CD8-positive, alpha-beta T cell (primary cell): ENCODE measurements at regions of chr13 and their contacts with region 1.

Region 1: GRCh38 chr13:95181586-95181985 is 119.7 kb downstream of the ABCC4 start:
- DNase-seq: no peak
- ATAC-seq: no peak
- H3K4me3 ChIP-seq: no peak overlapping the region
- H3K4me3 Mint-ChIP-seq: no peak overlapping the region
- H3K27ac ChIP-seq: no peak overlapping the region
- H3K27ac Mint-ChIP-seq: no peak overlapping the region
- H3K4me1 ChIP-seq: peaks cover 49% of the 10 kb centered on the region
- H3K4me1 Mint-ChIP-seq: peaks cover 82% of the 10 kb centered on the region
- H3K27me3 ChIP-seq: no peaks in the 10 kb centered on the region
- H3K27me3 Mint-ChIP-seq: no peaks in the 10 kb centered on the region
- CTCF ChIP-seq: no peak

Region 2: DNA sequence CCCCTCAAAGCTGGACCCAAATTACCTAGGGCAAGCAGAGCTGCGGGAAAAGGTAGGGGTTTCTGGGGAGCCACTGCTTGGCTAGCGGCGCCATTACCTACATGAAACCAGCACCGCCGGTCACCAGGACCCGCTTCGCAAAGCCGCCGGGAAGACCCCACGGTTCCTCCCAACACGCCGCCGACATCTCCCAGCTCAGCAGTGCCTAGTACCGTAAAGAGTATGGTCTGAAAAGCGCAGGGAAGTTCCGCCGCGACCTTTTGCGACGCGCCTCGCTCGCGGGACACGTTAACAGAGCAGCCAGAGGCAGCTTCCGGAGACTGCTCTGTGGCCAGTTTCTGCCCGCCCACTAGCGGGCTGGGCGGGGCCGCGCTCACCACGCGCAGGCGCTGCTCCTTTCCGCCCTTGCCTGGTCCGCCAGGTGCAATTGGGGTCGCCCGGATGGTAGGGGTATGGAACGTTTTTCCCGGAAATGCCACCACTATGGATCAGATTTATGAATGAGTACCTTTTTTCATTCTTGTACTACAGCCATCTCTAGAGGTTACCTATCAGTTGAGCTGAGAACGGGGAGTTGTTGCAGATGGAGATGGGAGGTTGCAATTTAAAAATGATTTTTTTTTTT is 585.5 kb before region 1 on chr13 and contains the start of gene TGDS:
- CTCF ChIA-PET with region 1: no interaction called
- POLR2A ChIA-PET with region 1: no interaction called
- intact Hi-C with region 1: loop called (anchors 5 to 10 kb)
- DNase-seq: peak; percentile 74 to 96 (median 87)
- ATAC-seq: peak; percentile 97
- H3K4me3 ChIP-seq: peak within 1 kb of the TSS; percentile 94 to 97
- H3K4me3 Mint-ChIP-seq: peak within 1 kb of the TSS; percentile 88
- H3K27ac ChIP-seq: peak within 1 kb of the TSS; percentile 77 to 83
- H3K27ac Mint-ChIP-seq: peak within 1 kb of the TSS; percentile 94
- H3K4me1 ChIP-seq: peaks cover 24% of the 10 kb centered on the region
- H3K4me1 Mint-ChIP-seq: peaks cover 42% of the 10 kb centered on the region
- H3K27me3 ChIP-seq: no peaks in the 10 kb centered on the region
- H3K27me3 Mint-ChIP-seq: no peaks in the 10 kb centered on the region
- CTCF ChIP-seq: no peak
- total RNA-seq, gene TGDS: 4.5 to 4.6 TPM

Region 3: DNA sequence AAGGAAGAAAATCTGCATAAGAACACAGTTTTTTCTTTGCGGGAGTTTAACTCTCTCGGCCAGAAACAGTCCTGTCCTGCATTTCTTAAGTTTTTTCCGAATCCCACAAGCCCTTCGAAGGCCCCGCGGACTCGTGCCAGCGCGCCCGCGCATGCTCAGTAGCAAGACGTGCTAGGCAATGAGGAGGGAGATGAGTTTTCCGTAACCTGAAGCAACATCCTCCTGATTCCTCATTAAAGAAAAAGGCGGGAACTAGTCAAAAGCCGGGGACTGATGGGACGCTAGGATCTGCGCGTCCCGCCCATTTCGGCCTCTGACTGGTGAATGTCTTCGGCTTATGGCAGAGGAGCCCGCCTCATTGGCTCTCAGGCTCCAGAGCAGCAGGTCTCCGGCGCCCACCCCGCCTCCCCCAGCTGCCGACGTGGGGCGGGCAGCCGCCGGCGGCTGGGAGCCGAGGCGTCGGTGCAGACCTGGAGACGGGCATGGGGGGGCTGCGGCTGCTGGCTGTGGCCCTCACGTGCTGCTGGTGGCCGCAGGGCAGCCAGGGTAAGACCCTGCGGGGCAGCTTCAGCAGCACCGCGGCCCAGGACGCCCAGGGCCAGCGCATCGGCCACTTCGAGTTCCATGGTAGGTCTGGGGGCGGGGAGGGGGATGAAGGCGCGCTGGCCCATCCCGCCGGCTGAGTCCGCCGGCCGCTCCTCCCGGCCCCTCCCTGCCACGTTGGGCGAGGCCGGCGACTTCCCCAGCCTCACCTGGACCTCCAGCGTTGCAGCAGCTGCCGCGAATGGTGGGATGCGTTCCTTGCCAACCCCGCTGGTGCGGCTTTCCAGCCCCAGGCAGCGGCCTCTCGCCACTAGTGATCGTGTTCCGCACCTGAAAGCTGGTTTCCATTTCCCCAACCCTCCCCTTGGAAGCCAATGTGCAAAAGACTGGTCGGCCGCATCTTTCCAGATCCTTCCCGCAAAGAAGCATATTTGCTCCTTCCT is 579.8 kb before region 1 on chr13 and contains the start of gene GPR180:
- CTCF ChIA-PET with region 1: no interaction called
- POLR2A ChIA-PET with region 1: no interaction called
- intact Hi-C with region 1: loop called (anchors 5 to 10 kb)
- DNase-seq: peak; percentile 66 to 97 (median 87)
- ATAC-seq: peak; percentile 98
- H3K4me3 ChIP-seq: peak within 1 kb of the TSS; percentile 62 to 76
- H3K4me3 Mint-ChIP-seq: peak within 1 kb of the TSS; percentile 84
- H3K27ac ChIP-seq: peak within 1 kb of the TSS; percentile 43 to 51
- H3K27ac Mint-ChIP-seq: peak within 1 kb of the TSS; percentile 86
- H3K4me1 ChIP-seq: peaks cover 3% of the 10 kb centered on the region
- H3K4me1 Mint-ChIP-seq: peaks cover 42% of the 10 kb centered on the region
- H3K27me3 ChIP-seq: no peaks in the 10 kb centered on the region
- H3K27me3 Mint-ChIP-seq: no peaks in the 10 kb centered on the region
- CTCF ChIP-seq: no peak
- total RNA-seq, gene GPR180: 0.64 to 0.71 TPM

Region 4: GRCh38 chr13:95067303-95067702 is 114.3 kb before region 1 on chr13:
- CTCF ChIA-PET with region 1: no interaction called
- POLR2A ChIA-PET with region 1: no interaction called
- intact Hi-C with region 1: loop called in 1 of 2 experiments (anchors 1 kb)
- DNase-seq: no peak
- ATAC-seq: no peak
- H3K4me3 ChIP-seq: no peak overlapping the region
- H3K4me3 Mint-ChIP-seq: no peak overlapping the region
- H3K27ac ChIP-seq: no peak overlapping the region
- H3K27ac Mint-ChIP-seq: no peak overlapping the region
- H3K4me1 ChIP-seq: no peaks in the 10 kb centered on the region
- H3K4me1 Mint-ChIP-seq: no peaks in the 10 kb centered on the region
- H3K27me3 ChIP-seq: no peaks in the 10 kb centered on the region
- H3K27me3 Mint-ChIP-seq: no peaks in the 10 kb centered on the region
- CTCF ChIP-seq: no peak

Region 5: DNA sequence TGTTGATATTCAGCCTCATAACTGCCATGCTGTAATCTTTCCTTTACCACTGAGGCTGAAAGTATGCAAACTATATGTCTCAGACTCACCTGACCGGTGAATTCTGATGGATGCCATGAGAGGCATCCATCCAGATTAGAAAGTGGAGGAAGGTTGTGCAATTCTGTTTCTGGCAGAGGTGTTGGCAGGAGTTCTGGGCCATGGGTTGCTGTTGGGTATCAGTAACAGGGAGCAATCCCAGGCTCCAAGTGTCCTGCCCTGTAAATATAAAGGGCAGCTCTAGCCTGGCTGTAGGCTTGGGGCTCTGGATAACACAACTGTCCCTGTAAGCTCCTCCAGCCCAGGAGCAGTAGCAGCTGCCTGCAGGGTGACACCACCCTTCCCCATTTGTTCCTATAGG is 197.0 kb after region 1 on chr13:
- CTCF ChIA-PET with region 1: interaction called, 17 read pairs
- POLR2A ChIA-PET with region 1: no interaction called
- intact Hi-C with region 1: no loop called
- DNase-seq: no peak
- ATAC-seq: no peak
- H3K4me3 ChIP-seq: no peak overlapping the region
- H3K4me3 Mint-ChIP-seq: no peak overlapping the region
- H3K27ac ChIP-seq: no peak overlapping the region
- H3K27ac Mint-ChIP-seq: no peak overlapping the region
- H3K4me1 ChIP-seq: no peaks in the 10 kb centered on the region
- H3K4me1 Mint-ChIP-seq: peaks cover 3% of the 10 kb centered on the region
- H3K27me3 ChIP-seq: no peaks in the 10 kb centered on the region
- H3K27me3 Mint-ChIP-seq: peaks cover 11% of the 10 kb centered on the region
- CTCF ChIP-seq: no peak